ENCODE measurements at regions of chrX and their contacts with region 1.

Region 1: DNA sequence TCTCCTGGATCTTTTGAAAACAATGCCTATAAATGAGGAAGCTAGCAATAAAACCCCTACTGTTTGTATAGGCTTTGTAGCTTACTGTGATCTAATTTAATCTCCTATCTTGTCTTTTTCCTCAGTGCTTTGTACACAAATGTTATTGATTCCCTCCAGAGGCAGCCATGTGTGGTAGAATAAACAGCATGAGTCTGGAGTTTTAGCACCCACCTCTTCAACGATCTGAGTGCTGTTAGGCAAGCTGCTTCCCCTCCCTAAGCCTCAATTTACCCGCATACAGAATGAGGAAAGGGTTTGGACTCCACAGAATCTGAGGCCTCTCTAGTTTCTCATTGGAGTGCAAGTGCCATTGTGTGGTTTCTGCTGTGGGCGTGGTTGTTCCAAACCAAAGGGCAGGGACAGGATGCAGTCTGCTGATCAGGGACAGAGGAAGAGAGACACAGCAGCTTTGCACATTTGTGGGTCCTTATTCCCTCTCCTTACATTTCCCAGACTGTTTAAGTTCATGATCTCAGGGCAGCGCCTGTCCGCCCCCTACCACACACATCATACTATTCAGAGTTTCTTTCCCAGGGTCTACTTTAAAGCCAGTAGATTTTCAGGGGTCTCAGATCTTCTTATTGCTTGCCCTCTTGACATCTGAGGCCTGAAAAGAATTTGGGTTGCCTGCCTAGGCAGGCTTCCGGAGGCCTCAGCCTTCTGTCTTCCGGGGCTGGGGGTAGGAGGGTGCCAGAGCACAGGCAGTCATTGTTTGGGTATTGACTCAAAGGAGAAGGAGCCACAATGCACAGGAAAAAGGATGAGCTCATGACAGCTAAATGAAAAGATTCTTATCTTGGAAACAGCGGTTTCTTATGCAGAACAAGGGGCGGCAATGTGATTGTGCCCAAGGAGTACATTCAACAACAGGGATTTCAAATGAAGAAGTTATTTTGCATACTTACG is 114.9 kb upstream of the TEX13D start:
- DNase-seq: peak; percentile 89
- H3K4me3 Mint-ChIP-seq: peak overlapping the region; percentile 73
- H3K27ac Mint-ChIP-seq: peak overlapping the region; percentile 97
- H3K4me1 Mint-ChIP-seq: peaks cover 70% of the 10 kb centered on the region
- H3K27me3 Mint-ChIP-seq: no peaks in the 10 kb centered on the region

Region 2: GRCh38 chrX:123960042-123960611 is 257.5 kb before region 1 on chrX:
- intact Hi-C with region 1: loop called (anchors 1 kb)
- DNase-seq: peak; percentile 95
- H3K4me3 Mint-ChIP-seq: peak overlapping the region; percentile 84
- H3K27ac Mint-ChIP-seq: peak overlapping the region; percentile 98
- H3K4me1 Mint-ChIP-seq: peaks cover 14% of the 10 kb centered on the region
- H3K27me3 Mint-ChIP-seq: no peaks in the 10 kb centered on the region

Region 3: GRCh38 chrX:124232523-124233201 is 15.1 kb after region 1 on chrX:
- intact Hi-C with region 1: loop called (anchors 1 kb)
- DNase-seq: peak; percentile 65
- H3K4me3 Mint-ChIP-seq: no peak overlapping the region
- H3K27ac Mint-ChIP-seq: peak overlapping the region; percentile 20
- H3K4me1 Mint-ChIP-seq: peaks cover 9% of the 10 kb centered on the region
- H3K27me3 Mint-ChIP-seq: no peaks in the 10 kb centered on the region

Region 4: GRCh38 chrX:124280294-124280902 is 62.8 kb after region 1 on chrX:
- intact Hi-C with region 1: loop called (anchors 2 kb)
- DNase-seq: no peak
- H3K4me3 Mint-ChIP-seq: peak overlapping the region; percentile 49
- H3K27ac Mint-ChIP-seq: peak overlapping the region; percentile 83
- H3K4me1 Mint-ChIP-seq: peaks cover 17% of the 10 kb centered on the region
- H3K27me3 Mint-ChIP-seq: no peaks in the 10 kb centered on the region

Region 5: GRCh38 chrX:124293810-124294209 is 76.2 kb after region 1 on chrX:
- intact Hi-C with region 1: no loop called
- DNase-seq: no peak
- H3K4me3 Mint-ChIP-seq: no peak overlapping the region
- H3K27ac Mint-ChIP-seq: no peak overlapping the region
- H3K4me1 Mint-ChIP-seq: peaks cover 2% of the 10 kb centered on the region
- H3K27me3 Mint-ChIP-seq: no peaks in the 10 kb centered on the region

Region 6: GRCh38 chrX:124346117-124346876 is 128.7 kb after region 1 on chrX and contains the start of gene SH2D1A:
- intact Hi-C with region 1: loop called (anchors 1 kb)
- DNase-seq: peak; percentile 80
- H3K4me3 Mint-ChIP-seq: peak within 1 kb of the TSS; percentile 88
- H3K27ac Mint-ChIP-seq: peak within 1 kb of the TSS; percentile 99
- H3K4me1 Mint-ChIP-seq: peaks cover 38% of the 10 kb centered on the region
- H3K27me3 Mint-ChIP-seq: no peaks in the 10 kb centered on the region
- total RNA-seq, gene SH2D1A: 51.7 and 53.9 TPM in 2 replicates

Measured in activated CD4-positive, alpha-beta T cell treated with anti-CD3 and anti-CD28 coated beads, Interleukin-2, amount 10 ng/mL, durations not matched to agents 24 days and 14 days (primary cell).